GM10248 (cell line): ENCODE measurements at regions of chr9 and their contacts with region 1.

Region 1: GRCh38 chr9:116149844-116150243 is 3.7 kb upstream of the PAPPA start:
- DNase-seq: peak; percentile 24
- CTCF ChIP-seq: peak; percentile 42

Region 2: GRCh38 chr9:116020801-116021200 is 129.0 kb before region 1 on chr9:
- CTCF ChIA-PET with region 1: no interaction called
- POLR2A ChIA-PET with region 1: no interaction called
- DNase-seq: no peak
- CTCF ChIP-seq: no peak

Region 3: DNA sequence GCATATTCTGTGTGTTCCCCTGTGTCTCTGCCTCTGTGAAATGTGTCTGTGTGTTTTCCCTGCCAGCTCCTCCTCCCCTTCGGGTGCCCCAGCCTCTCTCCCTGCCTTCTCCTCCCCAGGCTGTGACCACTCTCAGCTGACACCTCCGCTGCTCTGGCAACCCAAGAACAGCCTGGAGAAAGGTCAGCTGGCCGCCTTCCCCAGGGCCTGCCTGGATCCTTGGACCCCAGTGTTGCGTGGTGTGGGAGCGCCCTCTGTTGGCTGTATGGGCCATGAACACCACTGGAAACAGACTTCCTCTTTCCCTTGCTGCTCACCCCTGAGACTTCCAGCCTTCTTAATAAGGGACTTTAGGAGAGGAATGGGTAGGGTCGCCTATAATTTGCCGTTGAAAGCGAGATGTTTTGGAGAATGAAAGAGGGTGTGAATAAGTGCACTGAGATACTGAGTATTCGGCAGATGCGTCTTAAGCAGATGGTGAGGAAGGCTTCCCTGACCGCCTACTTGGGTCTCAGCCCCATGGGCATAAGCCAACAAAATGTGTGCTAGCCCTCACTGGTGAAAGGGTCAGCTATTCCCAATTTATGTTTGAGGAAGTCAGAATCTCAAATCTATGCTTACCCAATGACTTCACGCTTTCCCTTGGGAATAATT is 422.4 kb after region 1 on chr9:
- CTCF ChIA-PET with region 1: interaction called, 12 read pairs
- POLR2A ChIA-PET with region 1: no interaction called
- DNase-seq: peak; percentile 74
- CTCF ChIP-seq: peak; percentile 77